Left colon (tissue), 2 donors: ENCODE measurements at regions of chr22 and their contacts with region 1.

Region 1: GRCh38 chr22:23281406-23282088 is 101.2 kb downstream of the BCR start:
- DNase-seq: peak; percentile 77 to 88
- ATAC-seq: peak; percentile 55

Region 2: GRCh38 chr22:22810018-22810427 is 471.5 kb before region 1 on chr22:
- intact Hi-C with region 1: no loop called
- DNase-seq: peak; percentile 50 to 82
- ATAC-seq: peak; percentile 74

Region 3: GRCh38 chr22:23178512-23179254 is 102.9 kb before region 1 on chr22:
- intact Hi-C with region 1: loop called (anchors 2 to 5 kb)
- DNase-seq: peak; percentile 47 to 76
- ATAC-seq: peak; percentile 38

Region 4: GRCh38 chr22:23240639-23241389 is 40.7 kb before region 1 on chr22:
- intact Hi-C with region 1: no loop called
- DNase-seq: no peak
- ATAC-seq: peak; percentile 56